HEK293T (cell line): ENCODE measurements at regions of chr2 and their contacts with region 1.

Region 1: DNA sequence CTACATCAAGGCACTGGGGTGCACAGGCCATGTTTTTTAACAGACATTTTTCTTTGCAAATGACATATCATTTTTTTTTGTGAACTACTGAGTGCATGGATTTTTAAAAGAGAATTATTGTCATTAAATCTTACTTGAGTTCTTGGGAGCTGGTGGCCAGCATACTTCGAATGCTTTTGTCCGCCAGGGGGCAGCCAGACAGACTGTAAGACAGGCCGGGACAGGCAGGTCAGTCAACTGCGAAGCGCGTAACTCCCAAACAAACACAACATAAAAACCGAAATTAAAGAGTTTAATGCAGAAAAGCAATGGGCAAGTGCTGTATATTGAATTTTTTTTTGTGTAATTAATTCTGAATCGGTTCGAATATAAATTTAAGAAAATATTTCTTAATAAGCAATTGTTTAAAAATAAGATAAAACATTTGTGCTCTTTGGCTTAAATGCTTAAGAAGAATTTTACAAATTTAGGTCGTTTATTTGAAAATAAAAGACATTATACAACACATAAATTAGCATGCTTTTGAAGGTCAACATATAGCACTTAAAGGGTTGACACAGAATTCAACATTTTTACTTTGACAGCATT is 142.2 kb upstream of the PXDN start:
- DNase-seq: peak; percentile 71

Region 2: GRCh38 chr2:1898461-1899395 is 12.2 kb after region 1 on chr2:
- CTCF ChIA-PET with region 1: interaction called, 10 read pairs
- POLR2A ChIA-PET with region 1: no interaction called
- DNase-seq: no peak

Region 3: DNA sequence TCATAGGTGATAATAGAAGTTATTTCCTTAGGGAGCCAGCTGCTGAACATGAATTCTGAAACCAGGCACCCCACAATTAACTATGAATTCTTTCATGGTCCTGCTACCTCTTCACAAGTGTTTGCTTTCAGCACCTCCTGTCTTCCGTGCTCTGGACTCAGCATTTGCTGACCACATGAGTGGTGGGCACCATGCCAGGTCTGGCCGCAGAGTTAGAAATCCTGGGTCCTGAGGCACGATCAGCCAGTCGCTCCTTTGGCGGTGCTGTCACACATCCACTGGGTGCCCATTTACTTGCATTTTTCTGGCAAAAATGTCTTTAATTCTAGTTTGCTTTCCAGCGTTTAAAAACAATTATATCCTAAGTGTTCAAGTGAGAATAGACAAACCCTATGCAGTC is 54.2 kb after region 1 on chr2:
- CTCF ChIA-PET with region 1: no interaction called
- POLR2A ChIA-PET with region 1: no interaction called
- DNase-seq: no peak

Region 4: GRCh38 chr2:2146969-2147900 is 260.7 kb after region 1 on chr2:
- CTCF ChIA-PET with region 1: no interaction called
- POLR2A ChIA-PET with region 1: no interaction called
- DNase-seq: no peak